CD14-positive monocyte (primary cell): ENCODE measurements at regions of chr7 and their contacts with region 1.

Region 1: DNA sequence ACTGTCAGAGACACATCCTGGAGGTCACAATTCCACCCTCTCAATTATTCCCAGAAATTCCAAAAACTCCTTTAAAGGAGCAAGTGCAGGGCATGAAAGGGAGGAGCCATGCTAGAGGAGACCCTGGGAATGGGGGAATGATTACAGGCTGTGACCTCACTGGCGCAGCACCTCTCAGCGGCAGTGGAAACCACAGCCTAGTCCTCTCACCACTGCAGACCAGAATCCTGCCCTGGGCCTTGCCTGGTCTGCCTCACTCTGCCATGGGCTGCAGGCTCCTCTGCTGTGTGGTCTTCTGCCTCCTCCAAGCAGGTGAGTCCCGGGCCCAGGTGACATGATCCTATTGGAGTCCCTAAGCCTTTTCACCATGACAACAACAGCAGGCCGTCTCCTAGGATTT is 50.5 kb upstream of the PRSS58 start:
- DNase-seq: no peak
- H3K4me3 ChIP-seq: no peak overlapping the region
- H3K4me3 Mint-ChIP-seq: no peak overlapping the region
- H3K27ac ChIP-seq: no peak overlapping the region
- H3K27ac Mint-ChIP-seq: peak overlapping the region in 1 of 7 donors; percentile 51
- H3K4me1 ChIP-seq: peaks cover under 1% of the 10 kb centered on the region in 2 donors
- H3K4me1 Mint-ChIP-seq: peaks cover 20% of the 10 kb centered on the region
- H3K27me3 ChIP-seq: no peaks in the 10 kb centered on the region
- H3K27me3 Mint-ChIP-seq: peaks cover 2 to 8% (median 7%) of the 10 kb centered on the region in 3 donors
- CTCF ChIP-seq: no peak

Region 2: DNA sequence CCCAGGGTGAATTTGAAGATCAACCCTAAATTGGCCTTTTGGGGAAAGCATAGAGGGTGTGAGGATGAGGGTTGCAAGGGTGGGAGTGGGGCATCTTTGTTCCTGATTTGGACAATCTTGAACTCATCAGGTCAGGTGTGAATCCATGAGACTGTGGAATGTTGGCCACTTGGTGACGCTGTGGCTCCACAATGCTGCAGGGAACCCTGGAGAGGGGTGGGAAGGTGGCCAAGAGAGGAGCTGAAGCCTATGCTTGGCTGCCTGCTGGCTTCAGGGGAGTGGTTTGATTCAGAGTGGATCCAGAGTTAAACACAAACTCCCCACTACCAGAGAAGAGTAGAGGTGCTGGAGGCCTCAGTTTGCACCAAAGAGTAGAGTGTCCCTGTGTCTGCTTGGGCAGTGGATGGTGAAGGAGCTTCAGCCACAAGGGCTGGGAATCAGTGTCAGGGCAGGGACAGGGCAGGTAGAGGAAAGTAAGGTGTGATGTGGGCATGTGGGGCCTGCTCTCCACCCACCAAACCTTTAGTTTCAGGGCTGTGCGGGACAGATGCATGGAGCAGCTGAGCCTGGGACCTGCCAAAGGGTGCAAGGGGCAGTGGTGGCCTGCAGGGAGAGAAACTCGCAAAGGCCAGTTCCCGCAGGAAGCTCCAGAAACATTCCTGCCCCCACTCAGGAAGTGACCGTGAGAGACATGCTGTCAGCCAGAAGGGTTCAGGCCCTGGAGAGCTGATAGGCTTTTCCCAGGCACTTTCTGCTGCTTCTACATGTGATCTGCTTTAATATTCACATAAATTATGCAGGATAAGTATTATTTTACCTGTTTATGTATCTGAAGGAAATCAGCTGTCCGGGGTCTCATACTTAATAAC is 30.5 kb after region 1 on chr7:
- intact Hi-C with region 1: loop called (anchors 1 to 2 kb)
- DNase-seq: no peak
- H3K4me3 ChIP-seq: no peak overlapping the region
- H3K4me3 Mint-ChIP-seq: no peak overlapping the region
- H3K27ac ChIP-seq: no peak overlapping the region
- H3K27ac Mint-ChIP-seq: no peak overlapping the region
- H3K4me1 ChIP-seq: no peaks in the 10 kb centered on the region
- H3K4me1 Mint-ChIP-seq: peaks cover 2% of the 10 kb centered on the region
- H3K27me3 ChIP-seq: no peaks in the 10 kb centered on the region
- H3K27me3 Mint-ChIP-seq: peaks cover 0 to 5% (median 2%) of the 10 kb centered on the region in 3 donors
- CTCF ChIP-seq: no peak

Region 3: DNA sequence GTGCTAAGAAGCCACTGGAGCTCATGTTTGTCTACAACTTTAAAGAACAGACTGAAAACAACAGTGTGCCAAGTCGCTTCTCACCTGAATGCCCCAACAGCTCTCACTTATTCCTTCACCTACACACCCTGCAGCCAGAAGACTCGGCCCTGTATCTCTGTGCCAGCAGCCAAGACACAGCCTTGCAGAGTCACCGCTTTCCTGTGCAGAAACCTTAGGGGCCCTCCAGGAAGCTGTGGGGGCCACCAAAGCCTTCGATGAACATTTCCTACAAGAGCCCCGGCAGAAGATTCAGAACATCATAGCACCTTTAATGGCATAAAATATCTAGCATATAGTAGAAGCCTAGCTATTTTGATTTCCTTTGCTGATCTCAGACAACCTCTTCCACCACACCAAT is 37.5 kb after region 1 on chr7:
- intact Hi-C with region 1: loop called (anchors 1 to 2 kb)
- DNase-seq: no peak
- H3K4me3 ChIP-seq: no peak overlapping the region
- H3K4me3 Mint-ChIP-seq: no peak overlapping the region
- H3K27ac ChIP-seq: no peak overlapping the region
- H3K27ac Mint-ChIP-seq: no peak overlapping the region
- H3K4me1 ChIP-seq: no peaks in the 10 kb centered on the region
- H3K4me1 Mint-ChIP-seq: peaks cover 2% of the 10 kb centered on the region
- H3K27me3 ChIP-seq: no peaks in the 10 kb centered on the region
- H3K27me3 Mint-ChIP-seq: peaks cover 0 to 2% (median 0%) of the 10 kb centered on the region in 3 donors
- CTCF ChIP-seq: no peak